CD8-positive, alpha-beta T cell (primary cell): ENCODE measurements at regions of chr11 and their contacts with region 1.

Region 1: DNA sequence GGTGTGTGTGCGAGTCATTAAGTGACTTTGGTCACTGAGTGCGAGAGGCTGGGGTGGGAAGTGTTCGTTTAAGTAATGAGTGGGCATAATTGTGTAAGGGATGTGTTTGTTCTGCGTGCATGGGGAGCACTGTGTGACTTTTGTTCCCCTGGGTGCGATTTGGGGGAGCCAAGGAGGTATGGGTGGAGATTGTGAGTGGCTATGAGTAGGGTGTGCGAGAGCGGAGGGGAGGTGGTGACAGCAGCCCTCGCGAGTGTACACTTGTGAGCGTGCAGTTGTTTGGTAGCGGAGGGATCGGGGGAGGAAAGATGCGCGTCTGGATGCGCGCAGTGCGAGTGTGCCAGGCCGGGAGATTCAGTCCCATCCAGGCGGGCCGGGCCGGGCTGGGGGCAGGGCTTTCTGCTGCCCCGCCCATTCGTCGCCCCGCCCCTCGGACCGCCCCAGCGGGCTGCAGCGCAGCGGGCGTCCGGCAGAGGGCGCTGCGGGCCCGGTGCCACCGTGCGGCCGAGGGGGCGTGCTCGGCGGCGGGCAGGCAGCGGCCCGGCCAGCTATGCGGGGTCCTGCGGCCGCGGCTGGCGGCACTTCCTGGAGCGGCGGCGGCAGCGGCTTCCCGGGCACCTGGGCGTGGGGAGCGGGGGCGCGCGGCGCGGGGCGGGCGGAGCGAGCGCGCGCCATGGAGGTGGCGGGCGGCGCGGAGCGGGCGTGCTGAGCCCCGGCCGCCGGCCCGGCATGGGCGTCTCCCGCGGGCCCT is at the start of gene DGKZ:
- DNase-seq: peak; percentile 83 to 96 (median 87)
- ATAC-seq: peak; percentile 80
- H3K4me3 ChIP-seq: peak within 1 kb of the TSS; percentile 72 to 94
- H3K4me3 Mint-ChIP-seq: peak within 1 kb of the TSS; percentile 90
- H3K27ac ChIP-seq: peak within 1 kb of the TSS; percentile 55 to 68
- H3K27ac Mint-ChIP-seq: peak within 1 kb of the TSS; percentile 90
- H3K4me1 ChIP-seq: peaks cover 72% of the 10 kb centered on the region
- H3K4me1 Mint-ChIP-seq: peaks cover 79% of the 10 kb centered on the region
- H3K27me3 ChIP-seq: no peaks in the 10 kb centered on the region
- H3K27me3 Mint-ChIP-seq: no peaks in the 10 kb centered on the region
- CTCF ChIP-seq: peak; percentile 55
- total RNA-seq, gene DGKZ: 131 to 135 TPM

Region 2: DNA sequence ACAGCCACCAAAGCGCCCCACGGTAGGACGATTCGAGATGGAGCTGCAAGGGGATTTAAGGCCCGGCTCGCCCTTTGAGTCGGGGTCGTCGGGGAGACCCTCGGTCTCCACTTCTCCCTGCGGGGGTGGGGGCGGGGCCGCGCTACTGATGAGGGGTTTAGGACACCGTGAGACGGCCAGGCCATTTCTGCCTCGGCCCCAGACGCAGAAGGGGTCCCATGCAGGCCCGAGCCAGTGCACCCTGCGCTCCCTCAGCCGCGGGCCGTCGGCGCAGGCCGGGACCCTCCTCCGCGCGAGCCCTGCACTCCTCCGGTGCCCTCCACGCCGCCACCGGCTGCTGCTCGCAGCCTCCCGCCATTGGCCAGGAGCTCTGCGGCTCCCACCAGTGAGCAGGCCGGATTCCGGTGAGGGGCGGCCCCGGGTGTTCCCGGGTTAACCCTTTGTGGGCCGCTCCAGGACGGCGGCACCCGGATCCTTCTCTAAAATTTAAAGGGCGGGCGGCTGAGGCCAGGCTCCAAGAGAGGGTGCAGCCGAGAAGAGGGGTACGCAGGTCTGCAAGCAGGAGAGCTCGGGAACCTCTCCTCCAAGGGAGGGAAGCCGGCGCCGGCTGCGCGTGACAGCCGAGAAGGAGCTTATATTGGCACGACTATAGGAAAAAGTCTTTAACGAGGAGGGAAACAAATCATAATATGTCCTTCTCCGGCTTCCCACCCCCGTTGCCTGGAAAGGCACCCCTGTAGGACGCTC is 51.6 kb before region 1 on chr11:
- CTCF ChIA-PET with region 1: interaction called, 3 read pairs
- POLR2A ChIA-PET with region 1: interaction called, 4 read pairs
- intact Hi-C with region 1: loop called in 1 of 2 experiments (anchors 1 kb)
- DNase-seq: peak; percentile 32 to 83 (median 76)
- ATAC-seq: peak; percentile 100
- H3K4me3 ChIP-seq: peak overlapping the region; percentile 54 to 57
- H3K4me3 Mint-ChIP-seq: peak overlapping the region; percentile 85
- H3K27ac ChIP-seq: no peak overlapping the region
- H3K27ac Mint-ChIP-seq: no peak overlapping the region
- H3K4me1 ChIP-seq: peaks cover 13% of the 10 kb centered on the region
- H3K4me1 Mint-ChIP-seq: peaks cover 7% of the 10 kb centered on the region
- H3K27me3 ChIP-seq: peaks cover 5 to 8% of the 10 kb centered on the region in 2 experiments
- H3K27me3 Mint-ChIP-seq: peaks cover 21% of the 10 kb centered on the region
- CTCF ChIP-seq: no peak

Region 3: GRCh38 chr11:46361283-46362155 is 14.5 kb after region 1 on chr11:
- CTCF ChIA-PET with region 1: interaction called, 412 read pairs
- POLR2A ChIA-PET with region 1: interaction called, 32 read pairs
- intact Hi-C with region 1: loop called (anchors 1 kb)
- DNase-seq: peak; percentile 30 to 85 (median 69)
- ATAC-seq: peak; percentile 97
- H3K4me3 ChIP-seq: peak overlapping the region; percentile 48 to 72
- H3K4me3 Mint-ChIP-seq: peak overlapping the region; percentile 81
- H3K27ac ChIP-seq: peak overlapping the region; percentile 70 to 79
- H3K27ac Mint-ChIP-seq: peak overlapping the region; percentile 93
- H3K4me1 ChIP-seq: peaks cover 74% of the 10 kb centered on the region
- H3K4me1 Mint-ChIP-seq: peaks cover 67% of the 10 kb centered on the region
- H3K27me3 ChIP-seq: no peaks in the 10 kb centered on the region
- H3K27me3 Mint-ChIP-seq: no peaks in the 10 kb centered on the region
- CTCF ChIP-seq: no peak

Region 4: DNA sequence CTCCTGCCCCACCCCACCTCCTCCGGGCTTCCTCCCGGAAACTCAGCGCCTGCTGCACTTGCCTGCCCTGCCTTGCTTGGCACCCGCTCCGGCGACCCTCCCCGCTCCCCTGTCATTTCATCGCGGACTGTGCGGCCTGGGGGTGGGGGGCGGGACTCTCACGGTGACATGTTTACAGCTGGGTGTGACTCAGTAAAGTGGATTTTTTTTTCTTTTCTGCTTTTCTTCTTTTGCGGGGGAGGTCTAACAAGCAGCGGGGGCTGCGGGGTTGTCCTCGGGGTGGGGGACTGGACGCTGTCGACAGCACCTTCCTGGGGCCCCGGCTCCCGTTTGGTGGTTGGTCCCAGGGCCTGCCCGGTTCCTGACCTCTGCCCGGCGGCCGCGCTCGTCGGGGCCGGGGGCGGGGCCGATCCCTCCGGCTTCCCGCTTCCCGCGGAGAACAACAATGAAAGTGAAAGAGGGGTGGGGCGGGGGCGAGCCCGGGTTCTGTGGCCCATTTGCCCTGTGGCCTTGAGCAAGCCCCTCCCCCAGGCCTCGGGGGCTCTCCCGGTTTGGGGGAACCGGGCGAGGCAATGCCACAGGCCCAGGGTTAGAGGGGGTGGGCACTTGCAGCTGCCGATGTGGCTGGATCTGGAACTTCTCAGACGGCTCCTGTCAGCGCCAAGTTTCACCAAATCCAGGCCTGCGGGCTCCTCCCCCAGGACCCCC is 33.4 kb after region 1 on chr11:
- CTCF ChIA-PET with region 1: interaction called, 412 read pairs
- POLR2A ChIA-PET with region 1: interaction called, 9 read pairs
- intact Hi-C with region 1: loop called in 1 of 2 experiments (anchors 5 kb)
- DNase-seq: peak in 8 of 9 experiments; percentile 27 to 72 (median 52)
- ATAC-seq: peak; percentile 57
- H3K4me3 ChIP-seq: peak overlapping the region; percentile 60 to 62
- H3K4me3 Mint-ChIP-seq: peak overlapping the region; percentile 78
- H3K27ac ChIP-seq: peak overlapping the region; percentile 27 to 44
- H3K27ac Mint-ChIP-seq: peak overlapping the region; percentile 83
- H3K4me1 ChIP-seq: peaks cover 11% of the 10 kb centered on the region
- H3K4me1 Mint-ChIP-seq: peaks cover 8% of the 10 kb centered on the region
- H3K27me3 ChIP-seq: peaks cover 0 to 16% of the 10 kb centered on the region in 2 experiments
- H3K27me3 Mint-ChIP-seq: peaks cover 5% of the 10 kb centered on the region
- CTCF ChIP-seq: no peak

Region 5: DNA sequence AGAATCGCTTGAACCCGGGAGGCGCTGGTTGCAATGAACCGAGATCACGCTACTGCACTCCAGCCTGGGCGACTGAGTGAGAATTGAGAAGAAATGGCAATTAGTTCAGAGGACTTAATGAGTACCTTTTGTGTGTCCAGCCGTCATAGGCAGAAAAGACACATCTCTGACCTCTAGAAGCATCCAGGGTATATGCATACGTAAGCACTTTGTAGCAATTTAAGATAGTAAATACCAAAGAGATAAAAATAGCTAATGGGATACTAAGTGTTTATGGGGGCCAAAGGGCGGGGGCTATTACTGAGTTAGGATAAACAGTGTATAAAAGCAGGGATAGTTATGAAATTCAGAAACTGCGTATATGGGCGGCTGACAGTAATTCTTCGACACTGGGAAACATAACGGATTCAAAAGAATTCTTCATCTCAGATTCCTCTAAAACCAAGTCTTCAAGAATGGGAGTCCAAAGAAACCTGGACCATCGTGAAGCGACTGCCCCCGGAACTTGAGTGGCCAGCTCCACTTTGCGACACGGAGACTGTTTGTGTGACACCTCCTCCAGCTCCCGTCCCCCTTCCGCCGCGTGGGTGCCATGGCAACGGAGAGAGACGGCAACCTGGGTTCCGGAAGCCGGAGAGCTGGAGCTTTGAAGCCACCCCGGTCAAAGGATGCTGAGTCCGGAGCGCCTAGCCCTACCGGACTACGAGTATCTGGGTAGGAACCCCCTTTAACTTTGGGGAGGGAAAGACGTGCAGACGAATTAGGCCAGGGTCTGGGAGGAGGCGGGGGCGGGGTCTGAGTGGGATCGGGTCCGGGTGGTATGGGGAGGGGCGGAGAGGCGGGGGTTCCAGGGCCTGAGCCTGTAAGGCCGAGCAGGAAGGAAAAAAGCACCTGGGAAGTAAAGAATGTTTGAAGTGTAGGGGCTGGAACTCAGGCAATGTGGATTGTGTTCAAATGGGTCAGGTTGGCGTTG is 589.4 kb after region 1 on chr11 and contains the start of gene CSTPP1:
- CTCF ChIA-PET with region 1: no interaction called
- POLR2A ChIA-PET with region 1: no interaction called
- intact Hi-C with region 1: loop called (anchors 10 kb)
- DNase-seq: peak; percentile 80 to 97 (median 93)
- ATAC-seq: peak; percentile 96
- H3K4me3 ChIP-seq: peak within 1 kb of the TSS; percentile 73 to 82
- H3K4me3 Mint-ChIP-seq: peak within 1 kb of the TSS; percentile 97
- H3K27ac ChIP-seq: peak within 1 kb of the TSS; percentile 58 to 71
- H3K27ac Mint-ChIP-seq: peak within 1 kb of the TSS; percentile 95
- H3K4me1 ChIP-seq: peaks cover 9% of the 10 kb centered on the region
- H3K4me1 Mint-ChIP-seq: peaks cover 20% of the 10 kb centered on the region
- H3K27me3 ChIP-seq: no peaks in the 10 kb centered on the region
- H3K27me3 Mint-ChIP-seq: peaks cover 6% of the 10 kb centered on the region
- CTCF ChIP-seq: no peak
- total RNA-seq, gene CSTPP1: 4.1 to 4.6 TPM